H1 (cell line): ENCODE measurements at regions of chr3 and their contacts with region 1.

Region 1: GRCh38 chr3:94069194-94069813 is 6.4 kb downstream of the NSUN3 start:
- DNase-seq: no peak
- H3K4me3 ChIP-seq: no peak overlapping the region
- H3K27ac ChIP-seq: no peak overlapping the region
- H3K4me1 ChIP-seq: no peaks in the 10 kb centered on the region
- H3K27me3 ChIP-seq: no peaks in the 10 kb centered on the region
- CTCF ChIP-seq: peak in 1 of 3 experiments; percentile 36; a peak in 1 of 4 replicates
- EP300 ChIP-seq: no peak
- POLR2A ChIP-seq: no peak
- RAD21 ChIP-seq: peak in 1 of 2 experiments; percentile 8; a peak in 2 of 4 replicates

Region 2: GRCh38 chr3:94083261-94083660 is 14.0 kb after region 1 on chr3:
- CTCF ChIA-PET with region 1: interaction called, 15 read pairs
- POLR2A ChIA-PET with region 1: no interaction called
- DNase-seq: no peak
- H3K4me3 ChIP-seq: no peak overlapping the region
- H3K27ac ChIP-seq: no peak overlapping the region
- H3K4me1 ChIP-seq: no peaks in the 10 kb centered on the region; a peak in 1 of 7 replicates
- H3K27me3 ChIP-seq: no peaks in the 10 kb centered on the region
- CTCF ChIP-seq: no peak
- EP300 ChIP-seq: no peak
- POLR2A ChIP-seq: no peak
- RAD21 ChIP-seq: no peak

Region 3: DNA sequence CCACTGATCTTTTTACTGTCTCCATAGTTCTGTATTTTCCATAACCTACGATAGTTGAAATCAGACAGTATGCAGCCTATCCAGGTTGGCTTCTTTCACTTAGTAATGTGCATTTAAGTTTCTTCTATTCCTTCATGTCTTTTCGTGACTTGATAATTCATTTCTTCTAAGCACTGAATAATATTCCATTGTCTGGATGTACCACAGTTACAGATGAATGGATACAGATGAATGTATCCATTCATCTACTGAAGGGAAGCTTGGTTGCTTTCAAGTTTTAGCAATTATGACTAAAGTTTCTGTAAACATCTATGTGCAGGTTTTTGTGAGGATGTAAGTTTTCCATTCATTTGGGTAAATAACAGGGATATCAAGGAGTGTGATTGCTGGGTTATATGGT is 118.4 kb after region 1 on chr3:
- CTCF ChIA-PET with region 1: no interaction called
- POLR2A ChIA-PET with region 1: no interaction called
- DNase-seq: no peak
- H3K4me3 ChIP-seq: no peak overlapping the region
- H3K27ac ChIP-seq: no peak overlapping the region
- H3K4me1 ChIP-seq: no peaks in the 10 kb centered on the region
- H3K27me3 ChIP-seq: no peaks in the 10 kb centered on the region
- CTCF ChIP-seq: no peak
- EP300 ChIP-seq: no peak
- POLR2A ChIP-seq: no peak
- RAD21 ChIP-seq: no peak